HEK293T (cell line): ENCODE measurements at regions of chr15 and their contacts with region 1.

Region 1: GRCh38 chr15:39645138-39645975 is 64.5 kb downstream of the THBS1 start:
- DNase-seq: no peak

Region 2: DNA sequence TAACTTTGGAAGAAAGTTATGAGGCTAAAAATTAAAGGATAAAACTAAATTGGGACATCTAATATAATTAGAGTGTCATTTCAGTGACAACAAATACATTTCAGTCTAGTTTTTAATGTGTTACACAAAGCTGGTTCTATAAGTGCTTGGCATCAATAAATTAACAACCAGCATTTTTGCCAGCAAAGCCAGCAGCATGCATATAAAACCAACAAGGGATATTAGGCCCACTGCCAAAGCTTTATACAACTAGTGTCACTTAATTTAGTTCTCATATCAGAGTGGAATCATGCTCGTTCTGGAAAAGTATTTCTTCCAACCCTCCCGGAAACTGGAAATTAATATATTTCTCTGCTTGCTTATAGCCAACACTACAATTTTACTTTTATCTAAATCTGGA is 24.3 kb after region 1 on chr15:
- CTCF ChIA-PET with region 1: interaction called, 10 read pairs
- POLR2A ChIA-PET with region 1: no interaction called
- DNase-seq: no peak